Gastrocnemius medialis (tissue), 4 donors: ENCODE measurements at regions of chr17 and their contacts with region 1.

Region 1: GRCh38 chr17:70144260-70144846 is 25.0 kb upstream of the KCNJ2 start:
- DNase-seq: no peak
- ATAC-seq: peak; percentile 37 to 49
- H3K4me3 ChIP-seq: no peak overlapping the region
- H3K27ac ChIP-seq: no peak overlapping the region
- H3K4me1 ChIP-seq: peaks cover 4 to 7% of the 10 kb centered on the region in 2 donors
- H3K27me3 ChIP-seq: no peaks in the 10 kb centered on the region
- CTCF ChIP-seq: peak; percentile 69 to 80 (median 72)
- POLR2A ChIP-seq: no peak

Region 2: DNA sequence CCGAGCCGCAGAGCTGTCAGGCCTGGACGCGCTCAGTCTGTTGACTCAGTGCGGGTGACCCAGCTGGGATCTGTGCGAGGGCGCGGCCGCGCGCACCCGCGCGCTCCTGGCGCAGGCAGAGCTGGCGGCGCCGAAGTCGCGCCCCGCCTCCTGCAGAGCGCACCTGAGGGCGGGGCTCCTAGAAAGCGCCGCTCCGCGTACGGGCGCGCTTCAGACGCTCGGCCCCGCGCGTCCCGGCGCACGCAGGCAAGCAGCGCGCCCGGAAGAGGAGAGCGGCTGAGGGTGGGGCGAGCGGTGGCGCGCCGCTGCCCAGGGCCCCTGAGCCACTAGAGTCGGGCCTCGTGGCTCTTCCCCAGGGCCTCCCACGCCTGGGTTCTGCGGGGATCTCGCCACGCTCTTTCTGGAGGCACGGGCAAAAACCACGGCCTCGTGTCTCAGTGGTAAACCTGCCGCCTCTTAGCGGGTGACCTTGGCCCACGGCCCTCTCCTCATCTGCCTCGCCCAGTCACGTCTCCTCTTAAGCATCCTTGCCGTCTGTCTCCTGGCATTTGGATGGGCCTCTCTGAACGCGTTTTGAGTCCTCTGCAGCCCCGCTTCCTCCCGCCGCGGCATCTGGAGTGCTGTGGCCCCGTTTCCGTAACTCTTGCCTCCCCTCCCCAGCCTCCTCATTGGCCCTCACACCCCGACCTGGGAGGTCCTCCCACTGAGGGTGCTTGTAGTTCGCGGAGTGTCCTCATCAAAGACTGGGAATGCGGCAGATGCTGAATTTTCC is 817.1 kb before region 1 on chr17 and contains the start of gene ABCA5:
- in situ Hi-C with region 1: loop called in 1 of 4 experiments (anchors 25 kb)
- intact Hi-C with region 1: loop called (anchors 10 kb)
- DNase-seq: peak; percentile 74 to 91
- ATAC-seq: peak; percentile 86
- H3K4me3 ChIP-seq: peak within 1 kb of the TSS; percentile 79 to 94 (median 90)
- H3K27ac ChIP-seq: peak within 1 kb of the TSS; percentile 91 to 98 (median 97)
- H3K4me1 ChIP-seq: peaks cover 25 to 34% of the 10 kb centered on the region in 2 donors
- H3K27me3 ChIP-seq: no peaks in the 10 kb centered on the region
- CTCF ChIP-seq: peak in 2 of 5 experiments; percentile 3
- POLR2A ChIP-seq: peak; percentile 97 to 99
- total RNA-seq, gene ABCA5: 62.8 to 228 (median 123) TPM

Region 3: DNA sequence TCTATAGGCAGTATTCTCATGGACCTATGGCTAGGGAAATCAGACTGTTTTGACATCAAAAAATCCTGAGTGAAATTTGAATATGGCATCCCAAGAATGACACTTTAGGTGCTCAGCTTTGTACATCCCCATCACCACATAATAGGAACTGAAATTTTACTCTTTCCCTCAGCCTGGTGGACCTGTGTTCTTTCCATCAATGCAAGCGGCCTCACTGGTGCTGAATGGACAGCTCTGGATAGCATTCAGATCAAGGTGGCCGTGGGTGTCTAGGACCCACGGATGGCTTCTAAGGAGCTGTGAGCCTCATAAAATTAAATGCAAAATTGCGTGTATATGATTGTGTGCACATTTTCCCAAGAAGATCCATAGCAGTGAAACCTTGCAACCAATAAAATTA is 577.2 kb before region 1 on chr17:
- in situ Hi-C with region 1: loop called in 1 of 4 experiments (anchors 10 kb)
- intact Hi-C with region 1: loop called (anchors 2 kb)
- DNase-seq: no peak
- ATAC-seq: no peak
- H3K4me3 ChIP-seq: no peak overlapping the region
- H3K27ac ChIP-seq: no peak overlapping the region
- H3K4me1 ChIP-seq: peaks cover 3 to 5% of the 10 kb centered on the region in 2 donors
- H3K27me3 ChIP-seq: no peaks in the 10 kb centered on the region
- CTCF ChIP-seq: no peak
- POLR2A ChIP-seq: no peak

Region 4: DNA sequence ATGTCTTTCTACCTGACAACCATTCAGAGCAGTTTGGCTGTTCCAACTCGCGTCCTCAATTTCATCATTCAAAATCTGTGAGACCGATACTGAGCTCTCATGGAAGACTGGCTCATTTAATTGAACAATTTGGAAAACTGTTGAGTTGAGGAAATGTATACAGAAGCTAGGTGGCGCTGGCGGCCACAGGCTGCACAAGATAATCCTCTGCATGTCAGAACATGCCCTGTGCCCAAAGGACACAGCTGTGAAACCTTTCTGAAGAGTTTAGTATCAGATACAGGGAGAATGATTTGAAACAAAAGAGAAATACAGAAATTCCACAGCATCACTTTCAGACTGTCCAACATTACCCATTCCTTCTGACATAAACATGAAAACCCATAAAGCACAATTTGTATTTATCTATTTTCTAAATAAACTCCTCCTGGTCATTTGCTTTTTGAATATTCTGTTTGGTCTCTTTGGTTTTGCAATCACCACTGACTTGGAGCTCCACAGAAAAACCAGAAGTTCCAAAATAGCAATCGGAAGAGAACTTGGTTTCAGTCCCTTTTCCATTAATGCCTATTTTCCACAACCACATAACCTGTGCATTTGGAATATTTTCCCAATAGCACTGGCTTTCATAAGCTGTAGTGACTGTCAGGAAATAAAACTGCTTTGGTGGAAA is 537.1 kb before region 1 on chr17:
- in situ Hi-C with region 1: loop called in 2 of 4 experiments (anchors 5 to 10 kb)
- intact Hi-C with region 1: loop called (anchors 2 kb)
- DNase-seq: peak; percentile 55 to 75
- ATAC-seq: peak; percentile 60 to 88
- H3K4me3 ChIP-seq: no peak overlapping the region
- H3K27ac ChIP-seq: peak overlapping the region; percentile 69 to 80 (median 72)
- H3K4me1 ChIP-seq: peaks cover 27 to 35% of the 10 kb centered on the region in 2 donors
- H3K27me3 ChIP-seq: no peaks in the 10 kb centered on the region
- CTCF ChIP-seq: peak; percentile 78 to 94 (median 86)
- POLR2A ChIP-seq: no peak

Region 5: DNA sequence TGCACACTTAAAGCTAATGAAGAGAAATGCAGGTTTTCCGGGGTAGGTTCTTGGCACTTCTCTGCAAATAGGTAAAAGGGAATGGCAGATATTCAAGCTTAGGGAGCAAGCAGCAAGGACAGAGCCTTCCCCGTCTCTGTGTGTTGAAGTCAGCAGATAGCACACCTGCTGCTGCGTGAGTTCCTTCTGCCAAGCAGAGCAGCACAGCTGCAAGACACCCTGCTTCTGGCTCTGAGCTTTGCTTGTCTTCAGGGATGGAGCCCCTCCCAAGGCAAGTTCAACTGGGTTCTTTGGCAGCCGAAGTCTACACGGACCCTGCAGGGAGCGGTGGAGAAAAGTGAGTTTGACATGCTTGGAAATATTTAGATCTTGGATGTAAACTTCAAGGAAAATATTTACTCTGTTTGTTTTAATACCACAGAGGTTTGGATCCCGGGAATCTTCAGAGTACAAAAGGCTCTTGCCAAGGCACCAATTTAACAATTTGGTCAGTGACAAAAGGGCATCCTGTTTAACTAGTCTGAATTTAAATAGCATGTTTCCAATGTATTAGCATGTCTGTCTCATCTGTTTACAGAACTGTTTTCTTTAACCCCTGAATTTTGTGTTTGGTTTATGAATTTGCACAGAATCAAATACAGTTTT is 182.7 kb before region 1 on chr17:
- in situ Hi-C with region 1: no loop called
- intact Hi-C with region 1: loop called (anchors 10 kb)
- DNase-seq: peak; percentile 38 to 50
- ATAC-seq: peak; percentile 90 to 91
- H3K4me3 ChIP-seq: peak overlapping the region in 1 of 4 donors; percentile 3
- H3K27ac ChIP-seq: peak overlapping the region in 1 of 4 donors; percentile 7
- H3K4me1 ChIP-seq: peaks cover 12 to 18% of the 10 kb centered on the region in 2 donors
- H3K27me3 ChIP-seq: no peaks in the 10 kb centered on the region
- CTCF ChIP-seq: no peak
- POLR2A ChIP-seq: no peak